ENCODE measurements at regions of chr4 and their contacts with region 1.

Region 1: GRCh38 chr4:98510757-98511517 is 147.5 kb downstream of the TSPAN5 start:
- DNase-seq: no peak
- ATAC-seq: no peak
- H3K4me3 ChIP-seq: no peak overlapping the region
- H3K27ac ChIP-seq: no peak overlapping the region
- H3K4me1 ChIP-seq: peaks cover 24 to 61% of the 10 kb centered on the region in 2 experiments; a peak in 3 of 4 replicates
- H3K27me3 ChIP-seq: no peaks in the 10 kb centered on the region
- CTCF ChIP-seq: no peak
- POLR2A ChIP-seq: no peak
- RAD21 ChIP-seq: no peak

Region 2: DNA sequence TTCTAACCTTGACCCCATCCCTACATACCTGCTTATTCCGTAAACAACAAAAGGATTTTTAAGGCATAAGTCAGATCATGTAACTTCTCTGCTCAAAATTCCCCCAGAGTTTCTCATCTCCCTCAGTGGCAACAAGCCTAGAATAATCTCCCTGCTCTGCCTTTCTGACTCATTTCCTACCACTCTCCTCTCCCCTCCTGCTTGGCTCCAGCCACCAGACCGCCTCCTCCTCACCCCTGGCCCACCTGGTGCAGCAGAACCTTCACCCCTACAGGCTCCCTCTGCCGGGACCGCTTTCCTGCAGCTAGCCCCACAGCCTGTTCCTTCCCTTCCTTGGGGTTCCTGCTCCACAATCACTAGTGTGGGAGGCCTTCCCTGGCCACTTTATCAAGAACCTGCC is 115.4 kb after region 1 on chr4:
- CTCF ChIA-PET with region 1: no interaction called
- POLR2A ChIA-PET with region 1: no interaction called
- RAD21 ChIA-PET with region 1: no interaction called
- intact Hi-C with region 1: loop called (anchors 10 kb)
- DNase-seq: peak; percentile 92
- ATAC-seq: peak; percentile 86
- H3K4me3 ChIP-seq: peak overlapping the region in 1 of 2 experiments; percentile 37; a peak in 2 of 4 replicates
- H3K27ac ChIP-seq: peak overlapping the region; percentile 87
- H3K4me1 ChIP-seq: peaks cover 78 to 97% of the 10 kb centered on the region in 2 experiments
- H3K27me3 ChIP-seq: no peaks in the 10 kb centered on the region
- CTCF ChIP-seq: peak in 2 of 3 experiments; percentile 14 to 24; a peak in 1 of 6 replicates
- POLR2A ChIP-seq: no peak
- RAD21 ChIP-seq: peak; percentile 41; the same call in 1 of the 2 replicates

Measured in HCT116 (cell line).